Ascending aorta (tissue), 2 donors: ENCODE measurements at regions of chr4 and their contacts with region 1.

Region 1: GRCh38 chr4:705278-706082 is at the start of gene PCGF3:
- DNase-seq: peak; percentile 81 to 98
- H3K4me3 ChIP-seq: peak within 1 kb of the TSS; percentile 75 to 100
- H3K27ac ChIP-seq: peak within 1 kb of the TSS; percentile 79 to 92
- H3K4me1 ChIP-seq: peaks cover 6 to 13% of the 10 kb centered on the region in 2 donors
- H3K27me3 ChIP-seq: no peaks in the 10 kb centered on the region
- CTCF ChIP-seq: no peak
- total RNA-seq, gene PCGF3: 124 TPM

Region 2: DNA sequence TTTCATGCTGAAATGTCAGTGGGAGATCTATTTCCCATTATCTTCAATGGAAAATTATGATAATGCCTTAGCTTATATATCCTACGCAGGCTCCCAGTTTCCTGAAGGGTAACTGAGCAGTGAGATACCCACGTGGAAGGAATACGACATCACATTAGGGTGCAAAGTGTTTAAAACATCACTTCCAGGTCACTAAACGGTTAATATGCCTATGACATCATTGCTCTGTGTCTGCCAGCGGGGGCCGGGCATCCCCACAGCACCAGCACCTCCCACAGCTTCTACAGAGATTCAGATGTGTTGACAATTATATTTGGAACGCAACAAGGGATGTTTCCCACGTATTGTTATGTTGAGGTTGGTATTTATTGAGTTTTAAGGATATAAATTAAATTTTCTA is 156.5 kb before region 1 on chr4:
- intact Hi-C with region 1: no loop called
- DNase-seq: no peak
- H3K4me3 ChIP-seq: no peak overlapping the region
- H3K27ac ChIP-seq: no peak overlapping the region
- H3K4me1 ChIP-seq: no peaks in the 10 kb centered on the region
- H3K27me3 ChIP-seq: no peaks in the 10 kb centered on the region
- CTCF ChIP-seq: no peak

Region 3: GRCh38 chr4:581753-582361 is 123.6 kb before region 1 on chr4:
- intact Hi-C with region 1: no loop called
- DNase-seq: no peak
- H3K4me3 ChIP-seq: no peak overlapping the region
- H3K27ac ChIP-seq: no peak overlapping the region
- H3K4me1 ChIP-seq: no peaks in the 10 kb centered on the region
- H3K27me3 ChIP-seq: no peaks in the 10 kb centered on the region
- CTCF ChIP-seq: no peak

Region 4: DNA sequence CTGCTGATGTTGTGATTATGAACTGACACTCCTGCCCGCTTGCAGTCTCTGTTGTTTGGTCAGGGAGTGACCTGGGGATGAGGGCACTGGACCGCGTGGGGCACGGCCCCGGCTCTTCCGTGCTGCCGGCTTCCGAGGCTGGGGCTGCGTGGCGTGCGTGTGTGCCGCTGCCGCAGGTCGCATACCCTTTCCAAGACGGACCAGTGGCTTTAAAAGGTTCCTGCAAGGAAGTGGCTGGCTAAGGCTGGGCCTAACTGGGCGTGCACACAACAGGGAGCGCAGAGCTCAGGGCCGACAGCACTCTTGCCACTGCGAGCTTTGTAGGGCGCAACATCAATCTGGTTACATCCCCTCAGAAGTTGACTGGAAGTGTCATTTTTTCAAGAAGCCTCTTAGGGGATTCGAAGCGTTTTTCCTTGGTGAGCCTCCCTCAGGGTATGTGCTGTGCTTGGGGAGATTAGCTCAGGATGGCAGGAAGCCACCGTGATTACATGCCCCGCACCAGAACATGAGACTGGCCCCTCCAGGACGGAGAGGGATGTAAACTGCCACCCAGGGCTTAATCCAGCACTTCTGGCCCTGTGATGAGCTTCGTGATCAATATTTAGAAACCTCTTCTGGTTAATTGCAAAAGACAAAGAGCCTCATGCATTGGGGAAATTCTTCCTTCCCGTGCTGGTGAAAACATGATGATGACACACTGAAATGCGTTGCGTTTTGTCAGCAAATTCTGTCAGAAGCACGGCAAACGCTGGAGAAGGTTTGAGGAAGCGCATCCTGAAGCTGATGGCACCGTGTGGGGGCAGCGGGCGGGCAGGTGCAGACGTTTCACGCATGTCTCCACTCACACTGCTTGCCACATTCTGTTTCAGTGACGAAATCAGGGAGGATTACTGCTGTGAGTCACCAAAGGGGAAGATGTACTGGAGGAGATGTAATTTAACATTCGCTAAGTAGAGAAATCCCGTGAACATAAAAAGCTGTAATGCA is 595.3 kb after region 1 on chr4:
- intact Hi-C with region 1: no loop called
- DNase-seq: peak; percentile 43 to 82
- H3K4me3 ChIP-seq: no peak overlapping the region
- H3K27ac ChIP-seq: peak overlapping the region in 1 of 2 donors; percentile 13
- H3K4me1 ChIP-seq: no peaks in the 10 kb centered on the region
- H3K27me3 ChIP-seq: no peaks in the 10 kb centered on the region
- CTCF ChIP-seq: no peak

Region 5: GRCh38 chr4:2008875-2009703 is 1303.6 kb after region 1 on chr4 and contains the start of gene NELFA:
- intact Hi-C with region 1: loop called (anchors 5 kb)
- DNase-seq: peak; percentile 63 to 96
- H3K4me3 ChIP-seq: peak within 1 kb of the TSS; percentile 84 to 98
- H3K27ac ChIP-seq: peak within 1 kb of the TSS; percentile 96 to 98
- H3K4me1 ChIP-seq: peaks cover 0 to 2% of the 10 kb centered on the region in 2 donors
- H3K27me3 ChIP-seq: no peaks in the 10 kb centered on the region
- CTCF ChIP-seq: peak in 2 of 3 experiments; percentile 44 to 54
- total RNA-seq, gene NELFA: 11.9 TPM